Activated CD4-positive, alpha-beta T cell treated with anti-CD3 and anti-CD28 coated beads, Interleukin-2, amount 10 ng/mL, durations not matched to agents 24 days and 14 days (primary cell): ENCODE measurements at regions of chr9 and their contacts with region 1.

Region 1: DNA sequence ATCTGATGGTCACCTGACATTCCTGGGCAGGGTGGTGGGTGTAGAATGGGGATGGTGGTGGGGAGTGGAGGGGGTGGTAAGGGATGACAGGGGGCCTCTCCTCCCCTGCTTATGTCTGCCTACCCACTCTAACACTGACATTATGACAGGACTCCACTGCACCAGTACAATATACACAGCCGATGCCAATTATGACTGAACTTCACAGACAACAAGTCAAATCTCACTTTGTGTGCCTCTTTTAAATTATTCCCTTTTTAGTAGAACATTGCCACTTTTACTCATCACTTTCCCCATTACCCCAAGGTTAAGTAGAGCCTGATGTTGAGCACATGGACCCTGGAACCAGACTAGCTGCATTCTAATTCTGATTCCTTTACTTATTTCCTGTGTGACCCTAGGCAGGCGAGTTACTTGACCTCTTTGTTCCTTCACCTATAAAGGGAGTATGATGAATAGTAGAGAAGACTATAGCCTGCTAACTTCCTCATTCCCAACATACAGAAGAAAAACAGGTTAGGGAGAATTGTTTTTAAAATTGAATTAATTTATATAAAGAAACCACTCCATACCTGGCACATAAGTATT is 464.7 kb downstream of the DMRT2 start:
- DNase-seq: no peak
- H3K4me3 Mint-ChIP-seq: no peak overlapping the region
- H3K27ac Mint-ChIP-seq: no peak overlapping the region
- H3K4me1 Mint-ChIP-seq: no peaks in the 10 kb centered on the region
- H3K27me3 Mint-ChIP-seq: no peaks in the 10 kb centered on the region

Region 2: GRCh38 chr9:1042466-1042865 is 472.4 kb before region 1 on chr9:
- intact Hi-C with region 1: no loop called
- DNase-seq: peak; percentile 73
- H3K4me3 Mint-ChIP-seq: peak overlapping the region; percentile 44
- H3K27ac Mint-ChIP-seq: no peak overlapping the region
- H3K4me1 Mint-ChIP-seq: peaks cover 7% of the 10 kb centered on the region
- H3K27me3 Mint-ChIP-seq: peaks cover 80% of the 10 kb centered on the region

Region 3: GRCh38 chr9:1453637-1454610 is 60.9 kb before region 1 on chr9:
- intact Hi-C with region 1: no loop called
- DNase-seq: no peak
- H3K4me3 Mint-ChIP-seq: no peak overlapping the region
- H3K27ac Mint-ChIP-seq: no peak overlapping the region
- H3K4me1 Mint-ChIP-seq: no peaks in the 10 kb centered on the region
- H3K27me3 Mint-ChIP-seq: peaks cover 2% of the 10 kb centered on the region

Region 4: GRCh38 chr9:1495282-1496030 is 19.4 kb before region 1 on chr9:
- intact Hi-C with region 1: no loop called
- DNase-seq: no peak
- H3K4me3 Mint-ChIP-seq: no peak overlapping the region
- H3K27ac Mint-ChIP-seq: no peak overlapping the region
- H3K4me1 Mint-ChIP-seq: peaks cover 2% of the 10 kb centered on the region
- H3K27me3 Mint-ChIP-seq: no peaks in the 10 kb centered on the region

Region 5: DNA sequence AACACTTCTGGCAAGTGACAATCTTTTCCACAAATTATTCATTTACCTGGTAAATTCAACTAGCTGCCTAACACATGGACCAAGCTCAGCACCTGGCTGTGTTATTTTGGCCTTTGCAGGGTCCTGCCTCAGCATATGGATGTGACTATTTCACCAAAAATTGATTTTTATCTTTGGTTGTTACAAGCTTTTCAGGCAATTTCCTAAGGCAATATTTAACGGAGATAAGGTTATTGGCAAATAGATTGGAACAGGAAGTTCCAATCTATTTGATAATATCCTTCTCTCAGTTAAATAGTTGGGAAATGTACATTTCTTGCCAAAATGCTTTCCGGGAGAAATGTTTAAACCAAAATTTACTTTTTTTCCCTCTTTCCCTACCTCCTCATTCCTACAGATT is 85.1 kb after region 1 on chr9:
- intact Hi-C with region 1: loop called (anchors 10 kb)
- DNase-seq: no peak
- H3K4me3 Mint-ChIP-seq: no peak overlapping the region
- H3K27ac Mint-ChIP-seq: no peak overlapping the region
- H3K4me1 Mint-ChIP-seq: no peaks in the 10 kb centered on the region
- H3K27me3 Mint-ChIP-seq: no peaks in the 10 kb centered on the region